Left colon (tissue), 2 donors: ENCODE measurements at regions of chr22 and their contacts with region 1.

Region 1: DNA sequence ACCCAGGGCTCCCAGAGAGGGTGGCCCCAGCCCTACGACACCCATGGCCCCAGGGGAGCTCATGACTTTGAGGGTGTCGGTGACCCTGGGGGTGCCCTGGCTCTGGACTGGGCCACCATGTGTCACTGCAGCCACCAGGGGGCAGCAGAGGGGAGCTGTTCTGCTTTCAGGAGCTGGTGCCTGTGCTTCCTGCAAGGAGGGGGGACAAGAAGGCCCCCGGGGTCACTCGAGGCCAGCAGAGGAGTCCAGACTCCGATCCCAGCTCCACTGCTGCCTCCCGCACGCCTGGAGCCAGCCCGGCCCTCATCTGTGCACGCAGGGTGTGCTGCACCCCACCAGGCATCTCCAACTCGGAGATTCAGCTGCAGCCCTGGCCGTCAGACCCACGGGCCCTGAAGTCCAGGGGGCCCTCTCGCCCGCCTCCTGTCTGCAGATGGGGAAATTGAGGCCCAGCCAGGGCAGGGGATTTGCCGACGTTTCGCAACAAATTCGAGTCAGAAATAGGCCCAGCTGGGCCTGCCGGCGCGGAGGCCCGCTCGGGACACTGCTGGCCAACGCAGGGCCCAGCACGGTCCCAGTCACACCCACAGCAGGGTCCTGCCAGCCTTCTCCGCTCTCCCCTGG is 29.5 kb upstream of the WNT7B start:
- DNase-seq: peak; percentile 90 to 95
- ATAC-seq: peak; percentile 79

Region 2: DNA sequence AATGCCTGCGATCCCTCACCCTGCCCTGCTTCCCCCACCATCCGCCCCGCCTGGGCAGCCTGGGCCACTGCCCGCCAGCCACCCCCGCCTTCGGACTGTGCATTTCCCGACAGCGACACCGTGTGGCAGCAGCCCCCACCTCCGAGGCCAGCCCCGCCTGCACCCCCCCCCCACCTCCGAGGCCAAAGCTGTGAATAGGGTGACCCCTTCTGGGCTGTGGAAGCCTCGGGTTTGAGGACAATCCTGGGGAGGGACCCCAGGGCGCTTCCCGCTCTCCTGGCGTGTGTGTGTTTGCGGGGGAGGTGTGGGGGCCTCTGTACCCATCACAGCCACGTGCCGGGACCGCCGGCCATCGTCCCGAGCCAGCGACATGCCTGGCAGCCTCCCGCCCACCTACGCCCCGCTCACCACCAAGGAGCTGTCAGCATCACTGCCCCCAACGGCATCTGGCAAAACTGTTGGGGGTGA is 110.0 kb after region 1 on chr22:
- intact Hi-C with region 1: loop called (anchors 2 to 5 kb)
- DNase-seq: peak; percentile 90 to 97
- ATAC-seq: peak; percentile 78